ENCODE measurements at regions of chr3 and their contacts with region 1.

Region 1: GRCh38 chr3:10758304-10759061 is 57.5 kb upstream of the SLC6A11 start:
- DNase-seq: peak; percentile 61
- H3K4me3 Mint-ChIP-seq: no peak overlapping the region
- H3K27ac Mint-ChIP-seq: no peak overlapping the region
- H3K4me1 Mint-ChIP-seq: no peaks in the 10 kb centered on the region
- H3K27me3 Mint-ChIP-seq: peaks cover 35% of the 10 kb centered on the region

Region 2: GRCh38 chr3:10738688-10739372 is 19.7 kb before region 1 on chr3:
- CTCF ChIA-PET with region 1: interaction called, 13 read pairs
- DNase-seq: peak; percentile 78
- H3K4me3 Mint-ChIP-seq: no peak overlapping the region
- H3K27ac Mint-ChIP-seq: no peak overlapping the region
- H3K4me1 Mint-ChIP-seq: no peaks in the 10 kb centered on the region
- H3K27me3 Mint-ChIP-seq: peaks cover 30% of the 10 kb centered on the region

Region 3: GRCh38 chr3:10748040-10748439 is 10.4 kb before region 1 on chr3:
- CTCF ChIA-PET with region 1: interaction called, 11 read pairs
- DNase-seq: no peak
- H3K4me3 Mint-ChIP-seq: no peak overlapping the region
- H3K27ac Mint-ChIP-seq: no peak overlapping the region
- H3K4me1 Mint-ChIP-seq: no peaks in the 10 kb centered on the region
- H3K27me3 Mint-ChIP-seq: peaks cover 5% of the 10 kb centered on the region

Region 4: DNA sequence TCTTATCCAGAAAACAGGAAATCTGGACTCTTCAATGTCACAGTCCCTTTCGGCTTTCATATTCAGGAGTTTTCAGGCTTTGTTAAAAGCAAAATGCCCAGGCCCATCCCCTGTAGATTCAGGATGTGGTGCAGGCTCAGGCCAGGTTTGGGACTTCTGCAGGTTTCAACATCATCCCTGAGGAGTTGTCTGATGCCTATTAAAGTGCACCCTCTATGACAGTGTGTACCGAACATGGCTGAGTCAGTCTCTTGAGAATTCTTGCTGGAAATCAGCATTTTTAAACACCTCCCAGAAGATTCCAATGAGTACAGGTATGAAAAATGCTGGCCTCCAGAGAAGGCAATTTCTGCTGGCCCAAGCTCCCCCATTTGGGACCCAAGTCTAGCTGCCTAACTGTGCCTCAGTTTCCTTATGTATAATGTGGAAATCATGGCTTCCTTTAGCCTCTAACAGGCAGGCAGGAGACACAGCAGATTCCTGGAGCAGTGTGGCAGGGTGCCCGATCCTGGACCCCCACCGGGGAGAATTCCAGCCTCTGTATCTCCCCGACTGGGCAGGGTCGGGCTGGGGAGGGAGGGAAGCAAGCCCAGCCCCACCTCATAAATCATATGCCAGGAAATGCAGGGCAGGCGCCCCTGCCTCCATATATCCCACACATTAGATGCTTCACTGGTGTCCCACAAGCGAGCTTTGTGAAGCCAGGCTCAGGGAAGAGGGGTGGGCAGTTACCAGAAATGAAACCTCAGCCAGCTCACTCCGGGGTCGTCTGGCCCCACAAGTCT is 13.2 kb after region 1 on chr3:
- CTCF ChIA-PET with region 1: interaction called, 26 read pairs
- DNase-seq: no peak
- H3K4me3 Mint-ChIP-seq: no peak overlapping the region
- H3K27ac Mint-ChIP-seq: no peak overlapping the region
- H3K4me1 Mint-ChIP-seq: no peaks in the 10 kb centered on the region
- H3K27me3 Mint-ChIP-seq: peaks cover 33% of the 10 kb centered on the region

Region 5: GRCh38 chr3:10845839-10846656 is 87.6 kb after region 1 on chr3:
- CTCF ChIA-PET with region 1: no interaction called
- DNase-seq: no peak
- H3K4me3 Mint-ChIP-seq: no peak overlapping the region
- H3K27ac Mint-ChIP-seq: no peak overlapping the region
- H3K4me1 Mint-ChIP-seq: no peaks in the 10 kb centered on the region
- H3K27me3 Mint-ChIP-seq: peaks cover 18% of the 10 kb centered on the region

Region 6: GRCh38 chr3:10945683-10946287 is 187.3 kb after region 1 on chr3:
- CTCF ChIA-PET with region 1: interaction called, 16 read pairs
- DNase-seq: peak; percentile 72
- H3K4me3 Mint-ChIP-seq: no peak overlapping the region
- H3K27ac Mint-ChIP-seq: no peak overlapping the region
- H3K4me1 Mint-ChIP-seq: no peaks in the 10 kb centered on the region
- H3K27me3 Mint-ChIP-seq: peaks cover 18% of the 10 kb centered on the region

Region 7: GRCh38 chr3:11060500-11061251 is 302.2 kb after region 1 on chr3:
- CTCF ChIA-PET with region 1: interaction called, 23 read pairs
- DNase-seq: peak; percentile 56
- H3K4me3 Mint-ChIP-seq: no peak overlapping the region
- H3K27ac Mint-ChIP-seq: no peak overlapping the region
- H3K4me1 Mint-ChIP-seq: peaks cover 3% of the 10 kb centered on the region
- H3K27me3 Mint-ChIP-seq: peaks cover 21% of the 10 kb centered on the region